GM13977 (cell line): ENCODE measurements at regions of chr1 and their contacts with region 1.

Region 1: GRCh38 chr1:198157241-198157846 is 546 bp downstream of the NEK7 start:
- DNase-seq: peak; percentile 88
- CTCF ChIP-seq: no peak

Region 2: GRCh38 chr1:198298640-198299039 is 141.3 kb after region 1 on chr1:
- in situ Hi-C with region 1: no loop called
- DNase-seq: no peak
- CTCF ChIP-seq: no peak

Region 3: DNA sequence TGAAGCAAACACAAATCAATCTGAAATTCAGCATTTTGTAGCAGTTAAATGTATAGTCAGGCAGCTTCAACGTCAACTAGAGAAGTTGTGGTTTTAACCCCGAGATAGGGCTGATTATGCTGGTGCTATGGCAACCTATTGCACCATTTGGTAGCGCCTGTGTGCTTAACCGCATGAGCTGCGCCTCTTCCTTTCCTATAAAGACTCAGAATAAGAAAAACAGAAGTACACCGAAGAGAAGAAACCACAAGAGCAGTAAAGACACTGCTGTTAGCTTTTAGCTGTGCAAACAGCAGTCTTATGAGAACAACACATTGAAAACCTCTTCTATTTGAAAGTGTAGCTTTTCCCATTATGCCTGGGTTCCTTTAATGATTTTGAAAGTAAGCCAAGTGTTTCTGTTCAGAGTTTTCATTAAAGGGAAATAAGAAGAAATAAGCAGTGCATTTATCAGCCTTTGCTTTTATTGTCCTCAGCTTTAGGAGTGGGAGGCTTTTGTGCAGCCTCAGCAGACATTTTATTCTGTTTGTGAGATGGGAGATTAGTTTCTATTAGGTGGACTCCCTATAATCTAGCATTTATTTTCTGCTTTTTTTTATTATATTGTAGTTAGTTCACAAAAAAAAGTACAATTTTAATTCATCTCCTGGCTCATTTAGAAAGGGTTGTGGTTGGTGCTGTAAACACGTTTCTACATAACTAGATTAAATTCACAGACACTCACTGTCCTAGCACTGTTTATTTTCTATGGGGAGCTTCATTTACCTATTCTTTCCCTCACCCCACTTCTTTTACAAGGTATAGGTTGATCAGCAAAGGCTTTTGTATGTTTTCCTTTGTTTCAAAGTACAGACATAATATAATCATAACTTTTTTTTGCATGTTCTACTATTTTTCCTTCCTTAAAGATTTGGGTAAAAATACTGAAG is 524.8 kb after region 1 on chr1:
- in situ Hi-C with region 1: loop called (anchors 25 kb)
- DNase-seq: peak; percentile 70
- CTCF ChIP-seq: no peak